ENCODE measurements at regions of chr2 and their contacts with region 1.

Region 1: GRCh38 chr2:189580658-189581353 is at the start of gene SLC40A1:
- DNase-seq: peak; percentile 83 to 88
- ATAC-seq: peak; percentile 97 to 100 (median 98)
- H3K4me3 ChIP-seq: peak within 1 kb of the TSS; percentile 51 to 86 (median 73)
- H3K27ac ChIP-seq: peak within 1 kb of the TSS; percentile 91 to 99 (median 96)
- H3K4me1 ChIP-seq: peaks cover 4 to 76% (median 47%) of the 10 kb centered on the region in 9 donors
- H3K27me3 ChIP-seq: peaks cover 0 to 7% (median 0%) of the 10 kb centered on the region in 7 donors
- CTCF ChIP-seq: no peak
- total RNA-seq, gene SLC40A1: 31.1 to 93.9 (median 47.9) TPM

Region 2: GRCh38 chr2:189466660-189467059 is 114.1 kb before region 1 on chr2:
- intact Hi-C with region 1: loop called in 3 of 10 experiments (anchors 5 kb)
- DNase-seq: peak in 1 of 2 donors; percentile 26
- ATAC-seq: peak in 6 of 8 donors; percentile 47 to 73 (median 67)
- H3K4me3 ChIP-seq: no peak overlapping the region
- H3K27ac ChIP-seq: no peak overlapping the region
- H3K4me1 ChIP-seq: peaks cover 0 to 19% (median 5%) of the 10 kb centered on the region in 9 donors
- H3K27me3 ChIP-seq: no peaks in the 10 kb centered on the region
- CTCF ChIP-seq: peak; percentile 33 to 81 (median 72)

Region 3: DNA sequence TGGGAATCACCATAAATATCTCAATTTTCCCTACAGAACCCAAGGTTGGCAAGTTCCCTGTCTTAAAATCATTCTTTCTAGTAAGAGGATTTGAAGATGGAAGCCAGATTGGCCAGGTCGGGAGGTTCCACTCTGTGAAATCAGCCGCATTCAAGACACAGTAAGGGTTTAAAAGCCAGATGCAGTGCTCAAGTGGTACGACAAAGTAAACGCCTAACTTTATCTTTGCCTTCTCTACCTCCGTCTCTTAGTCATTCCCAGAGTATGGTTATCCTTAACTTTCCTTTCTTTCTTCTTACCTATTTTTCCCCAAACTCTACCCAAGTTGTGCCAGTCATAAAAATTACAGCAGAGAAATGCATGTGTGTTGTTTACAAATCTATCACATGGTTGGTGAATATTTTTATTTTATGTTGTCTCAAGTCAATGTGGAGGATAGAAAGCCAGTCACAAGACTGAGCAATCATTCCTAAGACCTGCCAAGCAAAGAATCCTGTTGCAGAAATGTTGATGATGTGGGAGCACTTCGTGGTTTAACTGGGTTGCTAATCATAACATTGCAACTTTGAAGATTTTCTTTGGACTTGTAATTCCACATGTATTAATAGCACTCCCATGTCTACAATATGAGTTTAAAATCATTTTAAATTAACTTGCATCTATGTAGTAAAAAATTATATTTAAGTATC is 62.8 kb before region 1 on chr2:
- intact Hi-C with region 1: loop called in 1 of 10 experiments (anchors 10 kb)
- DNase-seq: no peak
- ATAC-seq: no peak
- H3K4me3 ChIP-seq: no peak overlapping the region
- H3K27ac ChIP-seq: no peak overlapping the region
- H3K4me1 ChIP-seq: peaks cover 0 to 55% (median 11%) of the 10 kb centered on the region in 9 donors
- H3K27me3 ChIP-seq: no peaks in the 10 kb centered on the region
- CTCF ChIP-seq: no peak

Region 4: DNA sequence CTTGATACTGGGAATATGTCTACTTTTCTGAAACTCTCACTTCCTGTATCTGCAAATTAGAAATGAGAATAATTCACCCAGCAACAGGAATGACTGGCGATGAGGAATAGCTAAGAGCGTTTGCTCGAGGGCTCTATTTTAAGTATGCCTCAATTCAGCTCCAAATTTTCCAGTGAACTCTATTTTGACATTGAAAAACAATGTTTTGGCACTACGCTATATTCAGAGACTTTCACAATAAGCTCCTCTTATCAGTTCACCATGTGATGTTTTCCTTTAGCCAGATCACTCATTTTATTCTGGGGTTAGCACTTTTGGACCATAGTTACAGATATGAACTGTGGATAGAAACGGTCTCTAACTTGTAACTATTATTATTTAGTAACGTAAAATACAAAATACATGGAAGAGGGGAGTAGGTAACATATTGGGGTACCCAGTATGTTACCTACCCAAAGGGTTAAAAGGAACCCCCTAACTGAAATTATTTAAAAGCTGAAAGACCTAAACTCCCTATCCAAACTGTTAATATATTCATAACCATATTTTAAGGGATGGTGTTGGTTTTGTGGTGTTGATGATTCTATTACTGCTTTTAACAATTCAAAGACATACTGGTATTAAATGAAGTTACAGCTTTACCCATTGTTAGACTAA is 28.3 kb before region 1 on chr2:
- intact Hi-C with region 1: no loop called
- DNase-seq: no peak
- ATAC-seq: peak; percentile 61 to 79 (median 70)
- H3K4me3 ChIP-seq: no peak overlapping the region
- H3K27ac ChIP-seq: peak overlapping the region in 9 of 10 donors; percentile 15 to 67 (median 45)
- H3K4me1 ChIP-seq: peaks cover 3 to 75% (median 35%) of the 10 kb centered on the region in 9 donors
- H3K27me3 ChIP-seq: no peaks in the 10 kb centered on the region
- CTCF ChIP-seq: no peak

Region 5: GRCh38 chr2:189613077-189613636 is 32.4 kb after region 1 on chr2:
- intact Hi-C with region 1: loop called in 2 of 10 experiments (anchors 2 to 5 kb)
- DNase-seq: peak in 1 of 2 donors; percentile 71
- ATAC-seq: peak; percentile 94 to 98 (median 96)
- H3K4me3 ChIP-seq: peak overlapping the region in 8 of 10 donors; percentile 6 to 40 (median 29)
- H3K27ac ChIP-seq: peak overlapping the region; percentile 53 to 84 (median 80)
- H3K4me1 ChIP-seq: peaks cover 0 to 33% (median 23%) of the 10 kb centered on the region in 9 donors
- H3K27me3 ChIP-seq: no peaks in the 10 kb centered on the region
- CTCF ChIP-seq: no peak

Region 6: GRCh38 chr2:189618197-189618596 is 37.4 kb after region 1 on chr2:
- intact Hi-C with region 1: loop called in 2 of 10 experiments (anchors 2 to 5 kb)
- DNase-seq: no peak
- ATAC-seq: no peak
- H3K4me3 ChIP-seq: no peak overlapping the region
- H3K27ac ChIP-seq: no peak overlapping the region
- H3K4me1 ChIP-seq: peaks cover 0 to 13% (median 9%) of the 10 kb centered on the region in 9 donors
- H3K27me3 ChIP-seq: no peaks in the 10 kb centered on the region
- CTCF ChIP-seq: no peak

Region 7: DNA sequence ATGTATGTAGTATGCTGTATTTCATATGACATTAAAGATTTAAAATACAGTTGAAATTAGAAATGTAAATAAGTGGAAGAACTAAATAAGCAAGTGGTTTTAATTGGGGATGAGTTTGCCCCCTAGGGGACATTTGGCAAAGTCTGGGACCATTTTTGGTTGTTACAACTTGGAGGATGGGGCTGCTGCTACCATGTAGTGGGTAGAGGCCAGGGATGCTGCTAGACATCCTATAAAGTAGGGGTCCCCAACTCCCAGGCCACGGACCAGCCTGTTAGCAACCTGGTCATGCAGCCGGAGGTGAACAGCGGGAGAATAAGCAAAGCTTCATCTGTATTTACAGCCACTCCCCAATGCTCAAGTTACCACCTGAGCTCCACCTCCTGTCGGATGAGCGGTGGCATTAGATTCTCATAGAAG is 52.6 kb after region 1 on chr2:
- intact Hi-C with region 1: loop called in 3 of 10 experiments (anchors 5 kb)
- DNase-seq: peak in 1 of 2 donors; percentile 19
- ATAC-seq: peak in 2 of 8 donors; percentile 13 to 54
- H3K4me3 ChIP-seq: no peak overlapping the region
- H3K27ac ChIP-seq: no peak overlapping the region
- H3K4me1 ChIP-seq: peaks cover 0 to 8% (median 0%) of the 10 kb centered on the region in 9 donors
- H3K27me3 ChIP-seq: no peaks in the 10 kb centered on the region
- CTCF ChIP-seq: peak; percentile 10 to 65 (median 54)

Region 8: GRCh38 chr2:189646521-189646920 is 65.7 kb after region 1 on chr2:
- intact Hi-C with region 1: no loop called
- DNase-seq: no peak
- ATAC-seq: no peak
- H3K4me3 ChIP-seq: no peak overlapping the region
- H3K27ac ChIP-seq: no peak overlapping the region
- H3K4me1 ChIP-seq: no peaks in the 10 kb centered on the region
- H3K27me3 ChIP-seq: no peaks in the 10 kb centered on the region
- CTCF ChIP-seq: no peak